CD4-positive, alpha-beta T cell (primary cell): ENCODE measurements at regions of chr2 and their contacts with region 1.

Region 1: DNA sequence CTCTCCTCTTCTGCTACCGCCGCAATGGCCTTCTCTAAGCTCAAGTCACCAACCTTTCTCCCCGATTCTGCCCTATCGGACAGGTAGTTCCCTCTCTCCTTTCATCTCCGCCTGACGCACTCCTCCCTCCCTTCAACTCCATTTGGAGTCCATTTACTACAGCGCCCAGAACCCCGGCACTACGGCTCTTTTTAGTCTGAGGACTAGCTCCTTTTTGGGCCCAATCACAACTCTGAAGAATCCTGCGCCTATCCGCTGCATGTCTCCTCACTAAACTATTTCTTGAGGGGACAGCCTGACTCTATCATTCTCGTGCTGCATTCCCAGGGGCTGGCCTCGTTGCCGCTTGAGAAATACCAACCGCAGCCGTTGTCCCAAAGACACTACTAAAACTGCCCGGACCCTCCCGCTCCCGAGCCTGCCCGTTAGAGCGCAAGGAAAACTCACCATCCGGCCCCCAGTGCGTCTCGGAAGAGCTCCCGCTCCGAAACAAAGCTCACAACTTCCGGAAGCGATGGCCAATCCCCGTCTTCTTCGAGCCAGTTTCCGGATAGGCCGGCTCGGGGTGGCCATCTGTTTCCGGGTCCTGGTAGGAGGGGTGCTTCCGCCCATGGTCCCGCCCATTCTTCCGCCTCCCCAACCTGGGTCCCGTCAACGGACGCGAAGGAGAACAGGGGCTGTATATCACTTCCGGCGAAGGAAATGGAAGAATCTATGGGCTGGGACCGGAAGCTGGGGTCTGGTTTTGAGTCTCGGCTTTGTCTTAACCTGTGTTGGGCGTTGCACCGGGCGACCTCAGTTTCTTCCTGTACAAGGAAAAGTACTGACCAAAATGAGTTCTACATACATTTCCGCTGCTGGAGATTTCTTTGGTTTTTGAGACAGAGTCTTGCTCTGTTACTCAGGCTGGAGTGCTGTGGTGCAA is at the start of gene TPRKB:
- DNase-seq: peak; percentile 85 to 98 (median 93)
- ATAC-seq: peak; percentile 93
- H3K4me3 ChIP-seq: peak within 1 kb of the TSS; percentile 91
- H3K4me3 Mint-ChIP-seq: peak within 1 kb of the TSS; percentile 91
- H3K27ac ChIP-seq: peak within 1 kb of the TSS; percentile 55 to 62
- H3K27ac Mint-ChIP-seq: peak within 1 kb of the TSS; percentile 76
- H3K4me1 ChIP-seq: peaks cover 15% of the 10 kb centered on the region
- H3K4me1 Mint-ChIP-seq: peaks cover 20% of the 10 kb centered on the region
- H3K27me3 ChIP-seq: no peaks in the 10 kb centered on the region
- H3K27me3 Mint-ChIP-seq: no peaks in the 10 kb centered on the region
- CTCF ChIP-seq: no peak
- total RNA-seq, gene TPRKB: 16.1 to 18.2 TPM

Region 2: GRCh38 chr2:73239776-73240175 is 497.3 kb before region 1 on chr2:
- CTCF ChIA-PET with region 1: no interaction called
- POLR2A ChIA-PET with region 1: interaction called, 19 read pairs
- intact Hi-C with region 1: loop called (anchors 5 kb)
- DNase-seq: no peak
- ATAC-seq: no peak
- H3K4me3 ChIP-seq: no peak overlapping the region
- H3K4me3 Mint-ChIP-seq: no peak overlapping the region
- H3K27ac ChIP-seq: no peak overlapping the region
- H3K27ac Mint-ChIP-seq: no peak overlapping the region
- H3K4me1 ChIP-seq: peaks cover 25% of the 10 kb centered on the region
- H3K4me1 Mint-ChIP-seq: peaks cover 45% of the 10 kb centered on the region
- H3K27me3 ChIP-seq: no peaks in the 10 kb centered on the region
- H3K27me3 Mint-ChIP-seq: no peaks in the 10 kb centered on the region
- CTCF ChIP-seq: no peak

Region 3: GRCh38 chr2:73685770-73686438 is 51.2 kb before region 1 on chr2:
- CTCF ChIA-PET with region 1: no interaction called
- POLR2A ChIA-PET with region 1: no interaction called
- intact Hi-C with region 1: no loop called
- DNase-seq: no peak
- ATAC-seq: no peak
- H3K4me3 ChIP-seq: no peak overlapping the region
- H3K4me3 Mint-ChIP-seq: no peak overlapping the region
- H3K27ac ChIP-seq: no peak overlapping the region
- H3K27ac Mint-ChIP-seq: no peak overlapping the region
- H3K4me1 ChIP-seq: no peaks in the 10 kb centered on the region
- H3K4me1 Mint-ChIP-seq: no peaks in the 10 kb centered on the region
- H3K27me3 ChIP-seq: no peaks in the 10 kb centered on the region
- H3K27me3 Mint-ChIP-seq: no peaks in the 10 kb centered on the region
- CTCF ChIP-seq: no peak

Region 4: GRCh38 chr2:73779467-73780236 is 42.5 kb after region 1 on chr2 and contains the start of gene DUSP11:
- CTCF ChIA-PET with region 1: interaction called, 4 read pairs
- POLR2A ChIA-PET with region 1: interaction called, 13 read pairs
- intact Hi-C with region 1: loop called in 1 of 2 experiments (anchors 1 kb)
- DNase-seq: peak; percentile 93 to 98 (median 96)
- ATAC-seq: peak; percentile 99
- H3K4me3 ChIP-seq: peak within 1 kb of the TSS; percentile 95
- H3K4me3 Mint-ChIP-seq: peak within 1 kb of the TSS; percentile 99
- H3K27ac ChIP-seq: peak within 1 kb of the TSS; percentile 85 to 91
- H3K27ac Mint-ChIP-seq: peak within 1 kb of the TSS; percentile 97
- H3K4me1 ChIP-seq: peaks cover 14% of the 10 kb centered on the region
- H3K4me1 Mint-ChIP-seq: peaks cover 45% of the 10 kb centered on the region
- H3K27me3 ChIP-seq: no peaks in the 10 kb centered on the region
- H3K27me3 Mint-ChIP-seq: peaks cover 11% of the 10 kb centered on the region
- CTCF ChIP-seq: peak; percentile 90
- total RNA-seq, gene DUSP11: 57.1 to 61.5 TPM

Region 5: DNA sequence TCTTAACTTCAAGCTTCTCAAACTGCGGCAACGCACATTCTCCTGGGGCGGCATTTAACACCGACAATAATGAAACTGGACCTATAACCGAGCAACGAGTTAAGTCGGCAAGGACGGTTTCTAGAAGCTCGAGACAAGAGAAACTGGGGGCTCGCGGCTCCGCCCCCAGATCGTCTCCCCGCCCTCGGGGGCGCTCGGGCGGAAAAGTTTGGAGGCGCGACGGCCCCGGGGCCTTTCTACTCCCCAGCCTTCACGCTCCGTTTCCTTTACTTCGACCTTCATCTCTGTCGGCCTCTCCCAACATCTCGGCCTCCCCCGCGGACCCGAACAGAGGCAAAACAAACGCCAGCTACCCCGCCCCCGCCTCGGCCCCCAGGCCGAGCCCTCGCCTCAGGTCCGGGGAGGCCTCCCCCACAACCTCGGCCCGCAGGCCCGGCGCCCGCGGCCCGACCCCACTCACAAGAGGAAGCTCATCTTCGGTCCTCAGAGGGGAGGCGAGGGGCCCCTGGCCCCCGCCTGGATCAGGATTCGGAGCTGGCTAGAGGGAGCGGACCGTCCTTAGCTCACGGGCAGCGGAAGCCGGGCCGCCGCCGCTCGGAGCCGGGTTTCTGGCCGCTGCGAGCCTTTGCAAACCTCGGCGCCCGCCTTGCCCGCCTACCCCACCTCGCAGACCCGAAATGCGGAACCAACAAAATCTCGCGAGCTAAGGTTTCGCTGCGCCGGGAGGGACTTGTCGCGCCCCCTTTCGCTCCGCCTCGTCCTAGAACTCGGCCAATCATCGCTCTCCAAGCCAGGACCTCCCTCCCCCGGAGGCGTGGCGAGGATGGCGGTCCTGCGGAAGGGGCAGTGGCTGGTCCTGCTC is 441.3 kb after region 1 on chr2 and contains the start of gene MOB1A:
- CTCF ChIA-PET with region 1: interaction called, 3 read pairs
- POLR2A ChIA-PET with region 1: interaction called, 7 read pairs
- intact Hi-C with region 1: loop called in 1 of 2 experiments (anchors 2 kb)
- DNase-seq: peak; percentile 93 to 99 (median 97)
- ATAC-seq: peak; percentile 95
- H3K4me3 ChIP-seq: peak within 1 kb of the TSS; percentile 62
- H3K4me3 Mint-ChIP-seq: peak within 1 kb of the TSS; percentile 95
- H3K27ac ChIP-seq: peak within 1 kb of the TSS; percentile 89 to 96
- H3K27ac Mint-ChIP-seq: peak within 1 kb of the TSS; percentile 91
- H3K4me1 ChIP-seq: peaks cover 35% of the 10 kb centered on the region
- H3K4me1 Mint-ChIP-seq: peaks cover 39% of the 10 kb centered on the region
- H3K27me3 ChIP-seq: no peaks in the 10 kb centered on the region
- H3K27me3 Mint-ChIP-seq: no peaks in the 10 kb centered on the region
- CTCF ChIP-seq: no peak
- total RNA-seq, gene MOB1A: 150 to 159 TPM

Region 6: DNA sequence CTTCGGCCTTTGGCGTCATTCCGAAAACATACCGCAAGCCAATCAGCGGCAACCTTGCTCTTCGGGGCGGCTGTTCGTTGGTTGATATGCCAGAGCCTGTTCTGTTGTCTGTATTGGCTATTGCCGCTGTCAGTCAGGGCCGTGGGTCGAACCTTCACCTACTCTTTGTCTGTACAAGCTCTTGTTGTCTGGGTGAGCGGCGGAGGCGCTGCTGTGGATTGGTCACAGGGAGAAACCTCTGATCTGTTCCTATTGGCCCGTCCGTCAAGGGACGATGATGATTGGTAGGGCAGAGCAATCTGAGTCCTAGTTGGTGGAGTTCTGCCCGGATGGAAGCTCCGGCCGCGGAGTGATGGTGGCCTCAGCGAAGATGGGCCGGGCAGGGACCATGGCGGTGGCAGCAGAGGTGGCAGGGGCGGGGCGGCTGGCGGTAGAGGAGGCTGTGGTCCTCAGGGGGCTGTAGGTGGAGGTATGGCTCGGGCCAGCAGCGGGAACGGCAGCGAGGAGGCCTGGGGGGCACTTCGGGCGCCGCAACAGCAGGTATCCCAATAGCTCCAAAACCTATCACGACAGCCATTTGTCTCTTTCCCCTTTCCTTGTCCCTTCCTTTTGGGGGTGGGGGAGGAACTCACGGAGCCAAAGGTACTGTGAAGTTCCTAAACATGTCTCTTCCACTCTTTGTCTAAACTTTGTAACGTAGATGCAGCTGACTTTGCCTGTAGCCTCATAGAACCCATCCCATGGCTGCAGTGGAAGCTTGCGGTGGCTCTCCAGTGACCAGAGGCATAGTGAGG is 721.2 kb after region 1 on chr2 and contains the start of gene WBP1:
- CTCF ChIA-PET with region 1: no interaction called
- POLR2A ChIA-PET with region 1: interaction called, 16 read pairs
- intact Hi-C with region 1: loop called (anchors 2 kb)
- DNase-seq: peak; percentile 96 to 100 (median 98)
- ATAC-seq: peak; percentile 80
- H3K4me3 ChIP-seq: peak within 1 kb of the TSS; percentile 96
- H3K4me3 Mint-ChIP-seq: peak within 1 kb of the TSS; percentile 95
- H3K27ac ChIP-seq: peak within 1 kb of the TSS; percentile 100
- H3K27ac Mint-ChIP-seq: peak within 1 kb of the TSS; percentile 98
- H3K4me1 ChIP-seq: peaks cover 44% of the 10 kb centered on the region
- H3K4me1 Mint-ChIP-seq: peaks cover 64% of the 10 kb centered on the region
- H3K27me3 ChIP-seq: no peaks in the 10 kb centered on the region
- H3K27me3 Mint-ChIP-seq: no peaks in the 10 kb centered on the region
- CTCF ChIP-seq: no peak
- total RNA-seq, gene WBP1: 79.1 to 80.5 TPM